Activated T-helper 1 cell treated with anti-CD3 and anti-CD28 coated beads, Interleukin-12 subunit alpha, Interleukin-12 subunit beta, Interleukin-2, Interleukin-4 antibody, amounts not matched to agents 30 ng/mL and 10 ng/mL and 1 ng/mL, durations not matched to agents 14 hours and 24 hours and 36 hours (primary cell): ENCODE measurements at regions of chr5 and their contacts with region 1.

Region 1: GRCh38 chr5:131109540-131110255 is 55.4 kb downstream of the HINT1 start:
- DNase-seq: peak; percentile 11
- H3K4me3 Mint-ChIP-seq: no peak overlapping the region
- H3K27ac Mint-ChIP-seq: no peak overlapping the region
- H3K4me1 Mint-ChIP-seq: peaks cover 17% of the 10 kb centered on the region
- H3K27me3 Mint-ChIP-seq: no peaks in the 10 kb centered on the region

Region 2: GRCh38 chr5:129852747-129853352 is 1256.8 kb before region 1 on chr5:
- intact Hi-C with region 1: loop called (anchors 5 kb)
- DNase-seq: peak; percentile 35
- H3K4me3 Mint-ChIP-seq: no peak overlapping the region
- H3K27ac Mint-ChIP-seq: no peak overlapping the region
- H3K4me1 Mint-ChIP-seq: no peaks in the 10 kb centered on the region
- H3K27me3 Mint-ChIP-seq: peaks cover 2% of the 10 kb centered on the region

Region 3: DNA sequence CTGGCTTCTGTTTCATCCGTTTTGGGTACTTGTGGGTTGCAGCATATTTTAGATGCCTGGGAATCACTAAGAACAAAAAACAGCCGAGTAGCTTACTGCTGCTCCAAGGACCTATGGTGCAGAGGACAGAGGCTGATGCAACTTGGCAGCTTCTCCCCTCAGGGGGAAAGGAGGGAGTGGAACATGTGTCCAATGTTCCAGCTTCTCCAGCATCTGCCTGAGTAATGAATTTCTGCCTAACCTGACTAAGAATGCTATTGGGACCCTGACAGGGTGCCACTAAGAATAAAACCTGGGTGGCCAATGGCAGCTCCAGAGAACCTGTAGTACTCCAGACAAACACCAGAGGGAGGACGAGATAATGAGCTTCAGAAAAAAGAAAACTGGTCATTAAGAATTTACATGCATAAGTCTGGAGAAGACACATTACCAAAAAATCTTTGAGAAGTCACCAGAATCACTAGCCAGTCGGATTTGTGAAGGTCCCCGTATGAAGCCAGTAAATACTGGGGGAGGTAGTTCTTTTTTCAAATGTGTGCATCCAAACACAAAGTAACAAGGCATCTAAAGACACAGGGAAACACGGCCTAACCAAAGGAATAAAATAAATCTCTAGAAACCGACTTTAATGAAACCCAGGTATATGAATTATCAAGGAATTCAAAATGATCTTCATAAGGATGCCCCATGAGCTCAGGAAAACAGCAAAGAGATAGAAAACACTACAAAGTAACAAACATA is 238.2 kb before region 1 on chr5:
- intact Hi-C with region 1: loop called (anchors 1 kb)
- DNase-seq: peak; percentile 12
- H3K4me3 Mint-ChIP-seq: no peak overlapping the region
- H3K27ac Mint-ChIP-seq: no peak overlapping the region
- H3K4me1 Mint-ChIP-seq: no peaks in the 10 kb centered on the region
- H3K27me3 Mint-ChIP-seq: no peaks in the 10 kb centered on the region

Region 4: DNA sequence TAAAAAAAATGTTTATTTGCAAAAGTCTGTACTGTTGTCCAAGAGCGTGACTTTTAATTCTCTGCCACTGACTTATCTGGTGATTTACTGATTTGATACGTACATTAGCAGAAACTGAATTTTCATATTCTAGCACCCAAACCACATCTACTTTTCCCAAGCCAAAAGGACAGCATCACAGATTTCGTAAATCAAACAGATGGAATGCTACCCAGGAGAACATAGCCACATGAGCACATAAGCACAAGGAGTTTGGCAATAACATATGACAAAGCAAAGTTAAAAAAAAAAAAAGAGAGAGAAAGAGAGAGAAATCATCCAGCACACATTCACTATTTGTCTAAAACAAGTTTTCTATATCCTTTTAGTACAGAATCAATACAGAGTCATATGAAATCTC is 28.3 kb before region 1 on chr5:
- intact Hi-C with region 1: no loop called
- DNase-seq: no peak
- H3K4me3 Mint-ChIP-seq: no peak overlapping the region
- H3K27ac Mint-ChIP-seq: no peak overlapping the region
- H3K4me1 Mint-ChIP-seq: peaks cover 20% of the 10 kb centered on the region
- H3K27me3 Mint-ChIP-seq: peaks cover 11% of the 10 kb centered on the region